ENCODE measurements at regions of chr16 and their contacts with region 1.

Region 1: GRCh38 chr16:75566040-75566810 is at the start of gene GABARAPL2:
- DNase-seq: peak; percentile 92
- H3K4me3 Mint-ChIP-seq: peak within 1 kb of the TSS; percentile 100
- H3K27ac Mint-ChIP-seq: peak within 1 kb of the TSS; percentile 87
- H3K4me1 Mint-ChIP-seq: peaks cover 38% of the 10 kb centered on the region
- H3K27me3 Mint-ChIP-seq: peaks cover 14% of the 10 kb centered on the region
- total RNA-seq, gene GABARAPL2: 84.9 to 86.2 TPM

Region 2: DNA sequence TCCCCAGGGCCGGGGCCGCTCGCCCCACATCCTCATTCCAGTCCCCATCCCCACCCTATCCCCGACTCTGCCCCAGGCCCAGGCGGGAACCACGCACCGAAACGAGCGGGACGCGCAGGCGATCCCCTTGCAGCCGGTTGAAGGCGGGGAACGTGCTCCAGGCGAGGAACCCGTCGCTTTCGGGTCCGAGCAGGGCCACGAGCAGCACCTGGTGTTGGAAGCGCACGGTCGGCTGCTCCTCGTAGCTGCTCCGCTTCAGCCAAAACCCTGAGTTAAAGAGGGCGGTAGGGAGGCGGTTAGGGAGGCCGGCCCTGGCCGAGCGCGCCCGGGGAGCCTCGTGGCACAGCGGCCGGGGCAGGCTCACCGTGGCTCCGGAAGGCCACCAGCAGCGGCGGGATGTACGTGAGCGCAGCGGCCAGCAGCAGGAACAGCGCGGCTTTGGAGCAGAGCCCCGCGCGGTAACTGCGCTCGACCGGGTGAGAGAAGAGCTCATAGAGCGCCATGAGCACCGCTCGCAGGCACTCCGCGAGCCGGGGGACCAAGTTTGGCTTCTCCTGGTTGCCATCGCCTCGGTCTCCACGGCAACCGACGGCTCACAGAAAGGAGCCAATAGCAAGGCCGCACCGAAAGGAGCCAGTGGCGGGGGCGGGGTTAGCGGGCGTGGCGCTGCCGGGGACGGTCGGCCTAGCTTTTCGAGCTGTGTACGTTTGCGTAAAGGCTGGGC is 10.4 kb before region 1 on chr16 and contains the start of gene TMEM231:
- CTCF ChIA-PET with region 1: interaction called, 7 read pairs
- POLR2A ChIA-PET with region 1: interaction called, 30 read pairs
- DNase-seq: peak; percentile 98
- H3K4me3 Mint-ChIP-seq: peak within 1 kb of the TSS; percentile 86
- H3K27ac Mint-ChIP-seq: peak within 1 kb of the TSS; percentile 71
- H3K4me1 Mint-ChIP-seq: peaks cover 23% of the 10 kb centered on the region
- H3K27me3 Mint-ChIP-seq: peaks cover 5% of the 10 kb centered on the region
- total RNA-seq, gene TMEM231: 1.9 to 2.0 TPM